Activated CD4-positive, alpha-beta T cell treated with anti-CD3 and anti-CD28 coated beads for 36 hours (primary cell): ENCODE measurements at regions of chr12 and their contacts with region 1.

Region 1: DNA sequence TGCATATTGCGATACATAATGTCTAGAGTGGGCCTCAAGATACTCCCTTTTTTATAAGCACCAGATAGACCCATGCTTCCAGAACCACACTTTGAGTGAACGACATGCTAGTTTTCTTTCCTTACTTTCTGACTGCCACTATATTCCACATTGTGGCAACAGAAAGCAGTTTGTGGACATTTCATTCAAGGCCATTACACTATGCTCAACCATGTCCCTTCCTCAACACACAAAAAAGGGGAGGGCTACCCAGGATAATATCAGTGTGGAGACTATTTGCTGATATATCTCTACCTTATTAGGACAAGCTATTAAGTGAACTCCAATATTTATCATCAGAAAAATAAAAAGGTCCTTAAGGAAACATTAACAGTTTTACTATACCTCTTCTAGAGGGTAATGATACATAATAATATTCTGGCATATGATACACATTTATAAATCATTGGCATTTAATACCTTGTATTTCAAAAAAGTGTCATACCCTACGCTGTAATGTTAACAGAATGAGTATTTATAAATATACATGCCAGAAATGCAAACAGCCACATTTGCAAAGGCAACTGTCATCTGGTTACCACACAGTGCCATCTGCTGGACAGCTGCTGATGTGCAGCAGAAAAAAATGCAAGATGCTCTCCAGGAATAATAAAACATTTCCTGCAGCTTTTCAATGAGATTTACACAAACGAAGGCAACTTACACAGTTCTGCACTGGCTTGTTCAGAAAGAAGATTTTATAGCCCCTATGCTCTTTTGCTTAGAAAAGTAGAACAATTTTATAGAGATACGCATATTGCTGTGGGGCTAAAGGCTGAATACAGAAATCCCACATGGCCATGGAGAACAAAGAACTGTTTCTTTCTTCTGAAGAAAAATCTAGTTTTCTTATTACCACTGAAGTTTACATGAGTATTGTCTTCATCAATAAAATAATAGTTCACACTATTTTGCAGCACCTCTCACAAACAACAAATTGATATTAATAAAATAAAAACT is 182.2 kb upstream of the GRIP1 start:
- DNase-seq: peak; percentile 79
- ATAC-seq: peak; percentile 16
- H3K4me3 Mint-ChIP-seq: no peak overlapping the region
- H3K27ac Mint-ChIP-seq: no peak overlapping the region
- H3K4me1 Mint-ChIP-seq: peaks cover 12% of the 10 kb centered on the region
- H3K27me3 Mint-ChIP-seq: no peaks in the 10 kb centered on the region

Region 2: DNA sequence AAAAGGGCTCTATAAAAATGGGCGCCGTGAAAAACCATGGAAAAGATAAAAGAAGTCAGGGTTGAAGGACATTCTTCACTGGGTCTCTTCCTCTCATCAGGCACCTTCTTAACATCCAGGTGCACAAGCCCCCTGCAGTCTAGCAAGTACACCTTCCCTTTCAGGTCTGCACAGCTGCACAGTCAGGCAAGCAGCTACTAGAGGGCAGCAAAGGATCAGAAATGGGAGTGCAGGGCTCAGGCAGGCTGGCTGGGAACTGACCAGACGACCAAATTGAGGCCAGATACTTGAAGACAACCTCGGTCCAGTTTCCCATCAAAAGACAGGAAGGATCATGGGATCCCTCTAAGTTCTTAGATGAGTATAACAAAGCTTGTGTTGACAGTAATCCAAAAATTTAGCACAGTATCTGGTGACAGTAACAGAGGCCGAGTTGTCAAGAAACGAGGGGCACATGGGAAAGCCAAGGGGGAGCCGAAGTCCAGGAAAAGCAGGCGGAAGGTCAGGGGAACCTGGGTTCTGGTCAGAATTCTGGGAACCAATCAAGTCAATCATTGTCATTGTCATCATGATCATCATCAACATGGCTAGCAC is 172.1 kb before region 1 on chr12:
- CTCF ChIA-PET with region 1: interaction called, 7 read pairs
- POLR2A ChIA-PET with region 1: no interaction called
- intact Hi-C with region 1: loop called (anchors 1 kb)
- DNase-seq: peak; percentile 50
- ATAC-seq: peak; percentile 47
- H3K4me3 Mint-ChIP-seq: no peak overlapping the region
- H3K27ac Mint-ChIP-seq: no peak overlapping the region
- H3K4me1 Mint-ChIP-seq: peaks cover 2% of the 10 kb centered on the region
- H3K27me3 Mint-ChIP-seq: peaks cover 8% of the 10 kb centered on the region

Region 3: GRCh38 chr12:66708704-66709456 is 152.2 kb before region 1 on chr12:
- CTCF ChIA-PET with region 1: interaction called, 8 read pairs
- POLR2A ChIA-PET with region 1: no interaction called
- intact Hi-C with region 1: loop called in 1 of 2 experiments (anchors 2 kb)
- DNase-seq: no peak
- ATAC-seq: peak; percentile 33
- H3K4me3 Mint-ChIP-seq: no peak overlapping the region
- H3K27ac Mint-ChIP-seq: no peak overlapping the region
- H3K4me1 Mint-ChIP-seq: peaks cover 23% of the 10 kb centered on the region
- H3K27me3 Mint-ChIP-seq: peaks cover 2% of the 10 kb centered on the region

Region 4: DNA sequence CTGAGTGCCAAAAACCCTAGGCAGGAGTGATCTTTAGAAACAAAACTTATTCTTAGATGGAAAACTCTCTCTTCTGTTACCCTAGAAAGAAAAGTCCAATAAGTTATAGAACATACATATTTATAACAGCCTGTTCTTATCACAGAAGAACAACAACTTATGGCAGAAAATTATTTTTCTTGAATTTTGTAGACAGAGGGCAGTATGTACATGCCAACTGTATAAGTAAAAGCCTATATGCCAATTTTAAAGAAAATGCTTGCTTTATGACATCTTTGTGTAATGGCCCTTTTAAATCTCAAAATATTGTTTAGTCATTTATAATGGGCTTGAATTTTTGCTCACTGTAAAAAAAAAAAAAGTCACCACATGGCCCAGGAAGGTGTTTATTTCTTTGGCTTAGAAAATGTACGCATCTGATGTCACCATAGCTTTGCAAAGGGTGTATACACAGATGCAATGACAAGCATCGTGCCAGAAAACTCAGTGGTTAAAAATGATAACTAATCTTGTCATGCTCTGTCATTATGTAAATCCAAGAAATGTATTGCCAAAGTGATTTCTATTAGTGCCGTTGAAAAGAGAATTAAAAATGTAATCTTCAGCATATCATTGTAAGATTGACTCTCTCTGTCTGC is 143.9 kb before region 1 on chr12:
- CTCF ChIA-PET with region 1: interaction called, 6 read pairs
- POLR2A ChIA-PET with region 1: no interaction called
- intact Hi-C with region 1: loop called (anchors 1 to 2 kb)
- DNase-seq: no peak
- ATAC-seq: no peak
- H3K4me3 Mint-ChIP-seq: no peak overlapping the region
- H3K27ac Mint-ChIP-seq: no peak overlapping the region
- H3K4me1 Mint-ChIP-seq: peaks cover 26% of the 10 kb centered on the region
- H3K27me3 Mint-ChIP-seq: no peaks in the 10 kb centered on the region